Natural killer cell (primary cell): ENCODE measurements at regions of chr3 and their contacts with region 1.

Region 1: GRCh38 chr3:112437146-112438022 is 61.9 kb downstream of the BTLA start:
- DNase-seq: peak in 1 of 2 donors; percentile 53
- ATAC-seq: peak; percentile 89 to 98 (median 90)
- H3K4me3 ChIP-seq: no peak overlapping the region
- H3K4me3 Mint-ChIP-seq: peak overlapping the region; percentile 45
- H3K27ac ChIP-seq: no peak overlapping the region
- H3K27ac Mint-ChIP-seq: no peak overlapping the region
- H3K4me1 ChIP-seq: peaks cover 12% of the 10 kb centered on the region
- H3K4me1 Mint-ChIP-seq: peaks cover 10 to 11% of the 10 kb centered on the region in 2 donors
- H3K27me3 ChIP-seq: no peaks in the 10 kb centered on the region
- H3K27me3 Mint-ChIP-seq: peaks cover 2 to 5% of the 10 kb centered on the region in 2 donors
- CTCF ChIP-seq: peak; percentile 12

Region 2: GRCh38 chr3:112293368-112294321 is 143.7 kb before region 1 on chr3 and contains the start of gene SLC9C1:
- intact Hi-C with region 1: loop called (anchors 1 kb)
- DNase-seq: peak in 1 of 2 donors; percentile 78
- ATAC-seq: peak; percentile 47 to 80 (median 75)
- H3K4me3 ChIP-seq: peak within 1 kb of the TSS; percentile 1
- H3K4me3 Mint-ChIP-seq: peak within 1 kb of the TSS; percentile 72
- H3K27ac ChIP-seq: no peak within 1 kb of the TSS
- H3K27ac Mint-ChIP-seq: peak within 1 kb of the TSS in 1 of 2 donors; percentile 72
- H3K4me1 ChIP-seq: peaks cover 9% of the 10 kb centered on the region
- H3K4me1 Mint-ChIP-seq: peaks cover 21 to 31% of the 10 kb centered on the region in 2 donors
- H3K27me3 ChIP-seq: no peaks in the 10 kb centered on the region
- H3K27me3 Mint-ChIP-seq: no peaks in the 10 kb centered on the region
- CTCF ChIP-seq: peak; percentile 46
- total RNA-seq, gene SLC9C1: not detected

Region 3: GRCh38 chr3:112531358-112531781 is 94.0 kb after region 1 on chr3:
- intact Hi-C with region 1: no loop called
- DNase-seq: peak in 1 of 2 donors; percentile 61
- ATAC-seq: peak in 1 of 3 donors; percentile 57
- H3K4me3 ChIP-seq: no peak overlapping the region
- H3K4me3 Mint-ChIP-seq: no peak overlapping the region
- H3K27ac ChIP-seq: no peak overlapping the region
- H3K27ac Mint-ChIP-seq: peak overlapping the region; percentile 6 to 53
- H3K4me1 ChIP-seq: no peaks in the 10 kb centered on the region
- H3K4me1 Mint-ChIP-seq: peaks cover 5% of the 10 kb centered on the region in 2 donors
- H3K27me3 ChIP-seq: no peaks in the 10 kb centered on the region
- H3K27me3 Mint-ChIP-seq: no peaks in the 10 kb centered on the region
- CTCF ChIP-seq: peak; percentile 84